A549 (cell line): ENCODE measurements at regions of chr19 and their contacts with region 1.

Region 1: DNA sequence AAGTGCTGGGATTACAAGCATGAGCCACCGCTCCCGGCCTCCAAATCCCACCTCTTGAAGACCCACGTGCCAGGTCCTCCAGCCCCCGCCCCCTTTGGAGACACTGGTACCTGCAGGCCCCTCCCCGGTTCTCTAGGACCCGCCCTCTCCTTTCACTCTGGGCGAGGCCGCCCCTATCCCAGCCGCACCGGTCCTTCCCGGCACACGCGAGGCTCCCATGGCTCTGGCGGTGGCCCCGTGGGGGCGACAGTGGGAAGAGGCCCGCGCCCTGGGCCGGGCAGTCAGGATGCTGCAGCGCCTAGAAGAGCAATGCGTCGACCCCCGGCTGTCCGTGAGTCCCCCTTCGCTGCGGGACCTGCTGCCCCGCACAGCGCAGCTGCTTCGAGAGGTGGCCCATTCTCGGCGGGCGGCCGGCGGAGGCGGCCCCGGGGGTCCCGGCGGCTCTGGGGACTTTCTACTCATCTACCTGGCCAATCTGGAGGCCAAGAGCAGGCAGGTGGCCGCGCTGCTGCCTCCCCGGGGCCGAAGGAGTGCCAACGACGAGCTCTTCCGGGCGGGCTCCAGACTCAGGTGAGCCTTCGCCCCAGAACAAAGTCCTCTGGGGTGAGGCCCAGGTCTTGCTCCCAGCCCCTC is at the start of gene CBLC:
- DNase-seq: peak in 1 of 2 experiments; percentile 60
- ATAC-seq: peak; percentile 19 to 59; a peak in 4 of 6 replicates
- H3K4me3 ChIP-seq: no peak within 1 kb of the TSS
- H3K27ac ChIP-seq: peak within 1 kb of the TSS in 1 of 2 experiments; percentile 88; a peak in 3 of 6 replicates
- H3K4me1 ChIP-seq: peaks cover 33% of the 10 kb centered on the region
- CTCF ChIP-seq: no peak
- EP300 ChIP-seq: no peak
- POLR2A ChIP-seq: no peak
- RAD21 ChIP-seq: no peak
- polyA plus RNA-seq, gene CBLC: not detected in 2 replicates

Region 2: DNA sequence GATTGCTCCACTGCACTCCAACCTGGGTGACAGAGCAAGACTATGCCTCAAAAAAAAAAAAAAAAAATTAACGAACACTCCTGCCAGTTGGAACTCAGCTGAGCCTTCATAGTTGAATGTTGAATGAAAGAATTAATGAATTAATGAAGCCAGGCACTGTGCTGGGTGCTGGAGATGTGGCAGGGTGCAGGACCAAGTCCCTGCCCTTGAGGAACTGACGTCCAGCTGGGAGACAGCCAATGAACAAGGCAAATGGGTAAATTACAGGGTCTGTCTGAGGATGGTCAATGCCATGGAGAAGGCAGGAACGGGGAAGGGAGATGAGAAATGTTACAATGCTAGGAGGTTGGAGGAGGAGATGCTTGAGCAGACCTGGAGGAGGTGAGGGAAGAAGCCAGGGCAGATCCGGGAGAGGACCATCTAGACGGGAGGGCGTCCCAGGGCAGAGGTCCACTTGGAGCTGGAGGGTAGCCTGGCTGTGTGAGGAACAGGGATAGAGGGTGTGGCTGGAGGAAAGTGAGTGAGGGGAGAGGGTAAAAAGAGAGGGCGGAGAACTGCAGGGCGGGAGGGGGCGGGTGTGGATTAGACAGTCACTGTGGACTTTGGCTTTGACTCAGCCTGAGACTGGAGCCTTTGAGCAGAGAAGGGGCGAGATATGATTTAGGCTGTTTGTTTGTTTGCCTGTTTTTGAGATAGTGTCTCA is 181.3 kb before region 1 on chr19:
- CTCF ChIA-PET with region 1: no interaction called
- POLR2A ChIA-PET with region 1: no interaction called
- DNase-seq: peak; percentile 68 to 72
- ATAC-seq: peak; percentile 72 to 83
- H3K4me3 ChIP-seq: no peak overlapping the region
- H3K27ac ChIP-seq: peak overlapping the region; percentile 67 to 79
- H3K4me1 ChIP-seq: peaks cover 46% of the 10 kb centered on the region
- CTCF ChIP-seq: no peak
- EP300 ChIP-seq: no peak
- POLR2A ChIP-seq: no peak
- RAD21 ChIP-seq: 0 out of 5 replicates have a peak, but pooled peaks of 1 of the 2 experiments have one; percentile 12

Region 3: DNA sequence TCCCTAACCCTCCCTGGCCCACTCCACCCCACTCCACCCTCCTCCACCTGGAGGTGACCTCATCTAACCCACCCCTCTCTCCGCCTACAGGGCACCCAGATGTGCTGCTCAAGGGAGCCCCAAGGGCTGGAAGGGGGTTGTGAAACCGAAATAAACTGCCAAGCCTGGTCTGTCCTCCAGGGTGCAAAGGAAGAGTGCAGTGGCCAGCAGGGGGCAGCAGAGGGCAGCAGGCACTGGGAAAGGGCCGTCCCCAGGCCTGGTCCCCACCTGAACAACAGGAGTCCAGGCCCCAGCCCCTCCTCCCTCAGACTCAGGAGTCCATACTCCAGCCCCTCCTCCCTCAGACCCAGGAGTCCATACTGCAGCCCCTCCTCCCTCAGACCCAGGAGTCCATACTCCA is 22.6 kb after region 1 on chr19:
- CTCF ChIA-PET with region 1: interaction called, 170 read pairs
- POLR2A ChIA-PET with region 1: no interaction called
- DNase-seq: peak; percentile 89 to 97
- ATAC-seq: peak; percentile 95 to 98
- H3K4me3 ChIP-seq: no peak overlapping the region
- H3K27ac ChIP-seq: peak overlapping the region; percentile 62 to 79; a peak in 5 of 6 replicates
- H3K4me1 ChIP-seq: peaks cover 19% of the 10 kb centered on the region
- CTCF ChIP-seq: peak; percentile 92
- EP300 ChIP-seq: no peak
- POLR2A ChIP-seq: no peak
- RAD21 ChIP-seq: peak; percentile 81 to 86